Caco-2 (cell line): ENCODE measurements at regions of chr3 and their contacts with region 1.

Region 1: DNA sequence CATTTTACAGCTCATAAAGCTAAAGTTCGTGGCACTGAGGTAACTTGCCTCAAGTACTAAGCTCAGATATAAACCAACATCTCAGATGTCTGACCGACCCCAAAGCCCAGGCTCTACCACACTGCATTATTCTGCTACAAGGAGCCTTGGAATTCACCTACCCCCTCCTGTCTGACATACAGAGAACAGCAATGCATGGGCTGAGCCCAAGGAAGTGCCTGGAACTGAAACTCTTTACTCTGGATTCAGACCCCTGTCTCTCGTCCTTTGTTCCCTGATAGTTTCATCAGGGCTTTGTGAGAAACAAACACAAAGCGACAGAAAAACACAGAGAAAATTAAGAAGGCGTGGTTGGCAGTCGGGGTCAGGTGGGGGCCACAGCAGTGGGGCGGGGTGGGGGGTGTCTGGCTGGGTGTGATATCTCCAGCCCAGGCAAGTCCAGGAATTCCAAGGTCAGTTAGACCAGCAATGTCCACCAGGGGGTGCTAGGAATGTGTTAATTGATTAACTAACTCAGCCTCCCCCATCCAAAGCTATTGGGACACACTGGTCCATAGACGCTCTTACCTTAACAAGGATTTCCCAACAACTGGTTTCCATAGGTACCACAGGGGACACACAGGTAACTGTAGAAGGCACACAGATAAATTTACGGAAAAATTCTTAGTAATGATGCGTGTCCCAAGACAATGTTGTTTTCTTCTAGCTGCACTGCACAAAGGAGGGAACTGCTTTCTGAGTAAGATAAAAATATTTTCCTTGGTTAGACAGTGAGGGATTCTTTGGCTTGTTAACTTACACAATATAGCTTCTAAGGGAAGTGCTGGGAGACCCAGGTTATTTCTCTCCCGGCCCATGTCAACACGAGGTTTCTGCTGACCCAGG is 18.8 kb upstream of the SSUH2 start:
- DNase-seq: peak; percentile 87 to 90
- H3K4me3 ChIP-seq: no peak overlapping the region
- H3K4me3 Mint-ChIP-seq: no peak overlapping the region
- H3K27ac Mint-ChIP-seq: no peak overlapping the region
- H3K4me1 ChIP-seq: peaks cover 59% of the 10 kb centered on the region
- H3K4me1 Mint-ChIP-seq: peaks cover 35% of the 10 kb centered on the region
- H3K27me3 ChIP-seq: no peaks in the 10 kb centered on the region
- H3K27me3 Mint-ChIP-seq: no peaks in the 10 kb centered on the region
- CTCF ChIP-seq: peak; percentile 44 to 80

Region 2: DNA sequence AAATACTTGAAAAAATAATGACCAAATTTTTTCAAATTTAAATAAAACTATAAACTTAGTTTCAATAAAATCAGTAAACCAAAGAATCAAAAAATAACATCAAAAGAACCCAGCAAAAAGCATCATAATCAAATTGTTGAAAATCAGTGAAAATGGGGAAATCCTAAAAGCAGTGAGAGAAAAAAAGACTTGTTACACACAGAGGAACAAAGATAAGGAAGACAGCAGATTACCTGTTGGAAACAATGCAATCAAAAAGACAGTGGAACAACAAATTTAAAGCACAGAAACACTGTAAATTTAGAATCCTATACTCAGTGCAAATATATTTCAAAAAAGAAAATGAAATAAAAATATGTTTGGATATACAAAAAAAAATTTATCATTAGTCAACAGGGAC is 318.0 kb before region 1 on chr3:
- CTCF ChIA-PET with region 1: no interaction called
- POLR2A ChIA-PET with region 1: no interaction called
- intact Hi-C with region 1: no loop called
- DNase-seq: no peak
- H3K4me3 ChIP-seq: no peak overlapping the region
- H3K4me3 Mint-ChIP-seq: no peak overlapping the region
- H3K27ac Mint-ChIP-seq: no peak overlapping the region
- H3K4me1 ChIP-seq: no peaks in the 10 kb centered on the region
- H3K4me1 Mint-ChIP-seq: no peaks in the 10 kb centered on the region
- H3K27me3 ChIP-seq: no peaks in the 10 kb centered on the region
- H3K27me3 Mint-ChIP-seq: no peaks in the 10 kb centered on the region
- CTCF ChIP-seq: no peak

Region 3: GRCh38 chr3:8490079-8490552 is 173.3 kb before region 1 on chr3:
- CTCF ChIA-PET with region 1: no interaction called
- POLR2A ChIA-PET with region 1: no interaction called
- intact Hi-C with region 1: loop called (anchors 5 kb)
- DNase-seq: peak; percentile 37 to 52
- H3K4me3 ChIP-seq: no peak overlapping the region
- H3K4me3 Mint-ChIP-seq: no peak overlapping the region
- H3K27ac Mint-ChIP-seq: no peak overlapping the region
- H3K4me1 ChIP-seq: peaks cover 82% of the 10 kb centered on the region
- H3K4me1 Mint-ChIP-seq: peaks cover 54% of the 10 kb centered on the region
- H3K27me3 ChIP-seq: no peaks in the 10 kb centered on the region
- H3K27me3 Mint-ChIP-seq: no peaks in the 10 kb centered on the region
- CTCF ChIP-seq: no peak

Region 4: DNA sequence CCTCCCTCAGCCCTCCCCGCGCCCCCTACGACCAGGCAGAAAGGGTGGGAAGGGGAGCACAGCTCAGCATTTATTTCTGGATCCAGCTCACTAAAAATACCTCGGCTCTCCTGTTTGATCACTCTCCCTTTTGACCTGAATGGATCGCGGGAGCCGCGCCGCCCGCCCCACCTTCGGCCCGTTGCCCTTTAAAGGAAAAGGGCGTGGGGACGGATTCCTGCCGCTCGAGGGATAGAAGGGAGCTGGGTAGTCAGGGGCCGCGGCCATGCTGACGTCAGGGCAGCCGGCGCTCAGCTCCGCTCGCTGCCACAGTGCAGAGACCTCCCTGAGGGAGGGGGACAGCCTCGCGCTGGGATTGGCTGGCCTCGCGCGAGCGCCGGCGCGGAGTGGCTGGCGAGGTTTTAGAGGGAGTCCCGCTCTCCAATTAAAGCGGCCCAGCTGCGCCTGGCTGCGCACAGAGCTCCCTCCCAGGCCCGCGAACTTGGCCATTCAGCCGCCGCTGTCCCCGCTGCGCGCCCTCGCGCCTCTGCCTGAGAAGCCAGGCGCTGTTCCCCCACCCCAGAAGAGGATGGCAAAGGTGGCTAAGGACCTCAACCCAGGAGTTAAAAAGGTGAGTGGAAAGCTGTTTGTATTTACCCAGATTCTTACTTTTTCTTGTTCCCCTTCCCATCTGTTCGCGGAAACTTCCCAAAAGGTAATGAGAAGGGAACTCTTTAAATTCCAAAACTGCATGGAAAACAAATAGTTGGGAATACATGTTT is 161.9 kb before region 1 on chr3 and contains the start of gene LMCD1:
- CTCF ChIA-PET with region 1: interaction called, 5 read pairs
- POLR2A ChIA-PET with region 1: interaction called, 3 read pairs
- intact Hi-C with region 1: loop called (anchors 2 kb)
- DNase-seq: peak; percentile 96 to 98
- H3K4me3 ChIP-seq: peak within 1 kb of the TSS; percentile 59
- H3K4me3 Mint-ChIP-seq: peak within 1 kb of the TSS; percentile 94
- H3K27ac Mint-ChIP-seq: peak within 1 kb of the TSS; percentile 99
- H3K4me1 ChIP-seq: peaks cover 67% of the 10 kb centered on the region
- H3K4me1 Mint-ChIP-seq: peaks cover 52% of the 10 kb centered on the region
- H3K27me3 ChIP-seq: no peaks in the 10 kb centered on the region
- H3K27me3 Mint-ChIP-seq: no peaks in the 10 kb centered on the region
- CTCF ChIP-seq: peak in 1 of 2 experiments; percentile 7
- total RNA-seq, gene LMCD1: 23.9 and 24.7 TPM in 2 replicates

Region 5: DNA sequence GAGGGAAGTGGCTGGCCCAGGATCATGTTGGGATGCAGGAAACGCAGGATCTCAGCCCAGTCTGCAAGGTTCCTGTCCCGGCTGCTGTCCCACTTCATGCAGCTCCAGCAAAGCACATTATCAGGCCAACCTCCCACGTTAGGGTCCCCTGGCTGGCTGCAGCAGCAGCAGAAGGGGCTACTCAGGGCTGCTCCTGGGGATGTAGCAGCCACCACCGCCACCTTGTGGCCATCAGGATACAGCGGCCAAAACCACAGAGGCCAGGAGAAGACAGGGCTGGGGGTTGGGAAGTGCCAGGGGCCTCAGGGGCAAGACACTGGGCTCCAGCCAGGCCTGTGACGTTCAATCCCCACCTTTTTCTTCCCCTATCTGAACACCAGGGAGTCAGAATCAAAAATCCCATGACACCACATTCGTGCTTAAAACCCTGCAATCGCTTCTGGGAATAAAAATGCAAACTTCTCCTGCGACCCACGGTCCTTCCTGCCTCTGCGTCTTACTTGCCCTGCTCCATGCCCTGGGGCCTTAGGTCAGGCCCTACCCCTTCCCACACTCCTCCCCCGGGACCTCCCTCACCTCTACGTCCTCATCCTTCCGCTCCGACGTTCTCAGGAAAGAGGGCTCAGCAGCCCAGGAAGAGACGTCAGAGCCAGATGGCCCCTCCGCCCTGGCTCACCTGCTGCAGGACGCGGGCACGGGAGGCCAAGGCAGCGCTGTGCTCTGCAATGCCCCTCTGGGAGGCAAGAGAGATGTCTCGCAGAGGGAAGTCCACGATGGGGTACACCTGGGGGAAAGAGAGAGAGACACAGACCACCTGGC is 40.3 kb before region 1 on chr3:
- CTCF ChIA-PET with region 1: interaction called, 3 read pairs
- POLR2A ChIA-PET with region 1: no interaction called
- intact Hi-C with region 1: loop called (anchors 5 kb)
- DNase-seq: peak; percentile 70 to 78
- H3K4me3 ChIP-seq: no peak overlapping the region
- H3K4me3 Mint-ChIP-seq: no peak overlapping the region
- H3K27ac Mint-ChIP-seq: peak overlapping the region; percentile 55
- H3K4me1 ChIP-seq: peaks cover 7% of the 10 kb centered on the region; the same call in 1 of the 2 replicates
- H3K4me1 Mint-ChIP-seq: peaks cover 7% of the 10 kb centered on the region
- H3K27me3 ChIP-seq: no peaks in the 10 kb centered on the region
- H3K27me3 Mint-ChIP-seq: no peaks in the 10 kb centered on the region
- CTCF ChIP-seq: peak; percentile 88

Region 6: DNA sequence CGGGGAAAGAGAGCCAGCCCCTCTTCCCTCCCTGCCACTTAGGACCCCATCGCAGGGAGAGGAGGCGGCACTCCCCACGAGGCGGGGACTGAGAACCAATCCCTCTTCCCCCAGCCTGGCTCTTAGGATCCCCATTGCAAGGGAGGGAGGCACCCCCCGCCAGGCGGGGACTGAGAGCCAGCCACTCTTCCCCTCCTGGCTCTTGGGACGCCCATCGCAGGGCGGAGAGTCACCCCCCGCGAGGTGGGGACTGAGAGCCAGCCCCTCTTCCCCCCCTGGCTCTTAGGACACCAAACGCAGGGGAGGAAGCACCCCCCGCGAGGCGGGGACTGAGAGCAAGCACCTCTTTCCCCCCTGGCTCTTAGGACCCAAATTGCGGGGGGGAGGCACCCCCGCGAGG is 15.3 kb after region 1 on chr3:
- CTCF ChIA-PET with region 1: interaction called, 3 read pairs
- POLR2A ChIA-PET with region 1: no interaction called
- intact Hi-C with region 1: loop called (anchors 1 kb)
- DNase-seq: no peak
- H3K4me3 ChIP-seq: no peak overlapping the region
- H3K4me3 Mint-ChIP-seq: no peak overlapping the region
- H3K27ac Mint-ChIP-seq: no peak overlapping the region
- H3K4me1 ChIP-seq: peaks cover 6% of the 10 kb centered on the region
- H3K4me1 Mint-ChIP-seq: peaks cover 7% of the 10 kb centered on the region
- H3K27me3 ChIP-seq: no peaks in the 10 kb centered on the region
- H3K27me3 Mint-ChIP-seq: no peaks in the 10 kb centered on the region
- CTCF ChIP-seq: no peak

Region 7: GRCh38 chr3:8713901-8714759 is 50.7 kb after region 1 on chr3:
- CTCF ChIA-PET with region 1: no interaction called
- POLR2A ChIA-PET with region 1: no interaction called
- intact Hi-C with region 1: loop called (anchors 1 kb)
- DNase-seq: peak in 1 of 2 experiments; percentile 24
- H3K4me3 ChIP-seq: no peak overlapping the region
- H3K4me3 Mint-ChIP-seq: no peak overlapping the region
- H3K27ac Mint-ChIP-seq: no peak overlapping the region
- H3K4me1 ChIP-seq: no peaks in the 10 kb centered on the region
- H3K4me1 Mint-ChIP-seq: no peaks in the 10 kb centered on the region
- H3K27me3 ChIP-seq: no peaks in the 10 kb centered on the region
- H3K27me3 Mint-ChIP-seq: no peaks in the 10 kb centered on the region
- CTCF ChIP-seq: peak; percentile 25 to 37

Region 8: DNA sequence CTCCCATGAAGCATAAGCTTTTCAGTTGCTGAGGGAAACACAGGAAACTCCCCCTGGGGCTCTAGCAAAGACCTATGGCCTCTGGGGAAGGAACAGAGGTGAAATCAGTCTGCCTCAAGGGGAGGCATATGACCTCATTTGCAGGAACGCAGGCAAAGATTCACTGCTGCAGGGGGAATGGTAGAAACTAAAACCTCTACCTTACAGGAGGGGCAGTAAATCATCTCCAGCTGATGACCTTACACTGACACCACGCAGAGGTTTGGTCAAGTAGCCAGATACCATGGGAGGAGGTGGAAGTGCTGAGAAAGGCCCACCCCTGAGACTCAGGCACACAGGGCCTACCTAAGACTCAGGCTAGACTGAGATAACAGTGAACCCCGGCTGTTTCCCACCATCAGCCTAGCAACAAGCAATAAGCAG is 218.8 kb after region 1 on chr3:
- CTCF ChIA-PET with region 1: no interaction called
- POLR2A ChIA-PET with region 1: no interaction called
- intact Hi-C with region 1: loop called (anchors 10 kb)
- DNase-seq: peak in 1 of 2 experiments; percentile 47
- H3K4me3 ChIP-seq: no peak overlapping the region
- H3K4me3 Mint-ChIP-seq: no peak overlapping the region
- H3K27ac Mint-ChIP-seq: no peak overlapping the region
- H3K4me1 ChIP-seq: peaks cover 12% of the 10 kb centered on the region
- H3K4me1 Mint-ChIP-seq: peaks cover 6% of the 10 kb centered on the region
- H3K27me3 ChIP-seq: no peaks in the 10 kb centered on the region
- H3K27me3 Mint-ChIP-seq: no peaks in the 10 kb centered on the region
- CTCF ChIP-seq: no peak